ENCODE measurements at regions of chr17 and their contacts with region 1.

Region 1: DNA sequence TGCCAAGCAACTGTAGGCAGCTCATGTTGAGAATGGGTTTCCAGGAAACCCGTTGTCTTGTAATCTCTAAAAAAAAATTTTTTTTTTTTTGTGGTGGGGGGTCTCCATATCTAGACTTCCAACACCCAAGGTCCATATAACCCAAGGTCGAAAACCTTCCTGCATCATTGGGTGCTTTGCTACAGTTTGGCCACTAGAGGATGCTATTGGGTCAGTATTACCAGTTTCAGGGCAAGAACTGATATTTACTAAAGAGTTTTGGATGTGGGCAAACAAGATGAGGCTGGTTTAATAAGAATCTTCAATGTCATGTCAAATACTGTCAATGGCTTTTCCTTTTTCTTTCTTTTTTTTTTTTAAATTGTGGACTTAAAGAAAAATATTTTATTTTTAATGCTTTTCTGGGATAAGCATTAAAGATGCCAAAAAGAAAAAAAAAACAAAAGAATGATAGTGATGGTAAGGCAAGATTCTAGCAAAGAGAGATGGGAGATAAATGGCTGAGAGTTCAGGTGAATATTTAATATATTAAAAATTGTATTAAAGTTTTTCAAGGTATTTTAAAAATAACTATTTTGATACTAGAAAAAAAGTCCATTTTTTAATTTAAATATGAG is 62.2 kb downstream of the DHRS7C start:
- DNase-seq: peak in 1 of 2 experiments; percentile 20
- H3K4me3 ChIP-seq: no peak overlapping the region
- H3K4me3 Mint-ChIP-seq: no peak overlapping the region
- H3K27ac Mint-ChIP-seq: no peak overlapping the region
- H3K4me1 ChIP-seq: no peaks in the 10 kb centered on the region
- H3K4me1 Mint-ChIP-seq: no peaks in the 10 kb centered on the region
- H3K27me3 ChIP-seq: no peaks in the 10 kb centered on the region
- H3K27me3 Mint-ChIP-seq: no peaks in the 10 kb centered on the region
- CTCF ChIP-seq: peak; percentile 72 to 82

Region 2: DNA sequence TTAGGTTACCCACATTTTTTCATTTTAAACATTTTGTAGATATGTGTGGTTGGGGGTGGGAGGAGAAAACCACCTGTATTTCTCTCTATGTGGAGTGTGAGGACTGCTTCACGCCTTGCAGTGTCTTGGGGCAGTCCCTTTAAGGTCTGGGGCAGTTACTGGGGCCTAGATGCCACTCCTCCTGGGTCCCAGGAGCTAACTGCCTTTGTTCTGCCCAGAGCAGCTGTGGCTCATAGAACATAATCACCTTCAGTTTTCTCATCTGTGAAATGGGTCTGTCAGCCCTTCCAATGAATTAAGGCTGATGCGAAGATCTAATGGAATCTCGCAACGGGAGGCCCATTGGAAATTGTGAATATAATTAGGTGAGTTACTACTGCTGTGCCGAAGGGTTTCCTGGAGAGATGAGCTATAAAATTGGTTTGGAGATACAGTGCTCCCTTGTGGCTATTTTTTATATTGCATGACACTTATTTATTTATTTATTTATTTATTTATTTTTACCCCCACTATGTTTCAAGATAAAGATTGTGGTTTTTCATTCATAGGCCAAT is 39.3 kb after region 1 on chr17:
- CTCF ChIA-PET with region 1: interaction called, 12 read pairs
- POLR2A ChIA-PET with region 1: no interaction called
- intact Hi-C with region 1: loop called (anchors 1 kb)
- DNase-seq: peak in 1 of 2 experiments; percentile 3
- H3K4me3 ChIP-seq: no peak overlapping the region
- H3K4me3 Mint-ChIP-seq: no peak overlapping the region
- H3K27ac Mint-ChIP-seq: no peak overlapping the region
- H3K4me1 ChIP-seq: no peaks in the 10 kb centered on the region
- H3K4me1 Mint-ChIP-seq: peaks cover 5% of the 10 kb centered on the region
- H3K27me3 ChIP-seq: no peaks in the 10 kb centered on the region
- H3K27me3 Mint-ChIP-seq: peaks cover 3% of the 10 kb centered on the region
- CTCF ChIP-seq: peak in 1 of 2 experiments; percentile 19